Activated CD4-positive, alpha-beta memory T cell treated with anti-CD3 and anti-CD28 coated beads for 36 hours (primary cell): ENCODE measurements at regions of chr3 and their contacts with region 1.

Region 1: GRCh38 chr3:49454458-49454857 is 15.6 kb upstream of the DAG1 start:
- DNase-seq: no peak
- H3K4me3 Mint-ChIP-seq: no peak overlapping the region
- H3K27ac Mint-ChIP-seq: no peak overlapping the region
- H3K4me1 Mint-ChIP-seq: no peaks in the 10 kb centered on the region
- H3K27me3 Mint-ChIP-seq: no peaks in the 10 kb centered on the region

Region 2: GRCh38 chr3:49171119-49171774 is 283.2 kb before region 1 on chr3 and contains the start of gene KLHDC8B:
- CTCF ChIA-PET with region 1: interaction called, 21 read pairs
- POLR2A ChIA-PET with region 1: no interaction called
- intact Hi-C with region 1: loop called (anchors 1 kb)
- DNase-seq: peak; percentile 88
- H3K4me3 Mint-ChIP-seq: peak within 1 kb of the TSS; percentile 82
- H3K27ac Mint-ChIP-seq: no peak within 1 kb of the TSS
- H3K4me1 Mint-ChIP-seq: peaks cover 13% of the 10 kb centered on the region
- H3K27me3 Mint-ChIP-seq: no peaks in the 10 kb centered on the region
- total RNA-seq, gene KLHDC8B: 1.8 to 2.9 TPM

Region 3: GRCh38 chr3:49295489-49296058 is 158.9 kb before region 1 on chr3:
- CTCF ChIA-PET with region 1: interaction called, 12 read pairs
- POLR2A ChIA-PET with region 1: no interaction called
- intact Hi-C with region 1: loop called (anchors 1 kb)
- DNase-seq: peak; percentile 28
- H3K4me3 Mint-ChIP-seq: no peak overlapping the region
- H3K27ac Mint-ChIP-seq: no peak overlapping the region
- H3K4me1 Mint-ChIP-seq: no peaks in the 10 kb centered on the region
- H3K27me3 Mint-ChIP-seq: no peaks in the 10 kb centered on the region

Region 4: GRCh38 chr3:49333916-49334633 is 120.4 kb before region 1 on chr3:
- CTCF ChIA-PET with region 1: interaction called, 49 read pairs
- POLR2A ChIA-PET with region 1: interaction called, 6 read pairs
- intact Hi-C with region 1: no loop called
- DNase-seq: no peak
- H3K4me3 Mint-ChIP-seq: no peak overlapping the region
- H3K27ac Mint-ChIP-seq: peak overlapping the region; percentile 79
- H3K4me1 Mint-ChIP-seq: peaks cover 26% of the 10 kb centered on the region
- H3K27me3 Mint-ChIP-seq: no peaks in the 10 kb centered on the region

Region 5: DNA sequence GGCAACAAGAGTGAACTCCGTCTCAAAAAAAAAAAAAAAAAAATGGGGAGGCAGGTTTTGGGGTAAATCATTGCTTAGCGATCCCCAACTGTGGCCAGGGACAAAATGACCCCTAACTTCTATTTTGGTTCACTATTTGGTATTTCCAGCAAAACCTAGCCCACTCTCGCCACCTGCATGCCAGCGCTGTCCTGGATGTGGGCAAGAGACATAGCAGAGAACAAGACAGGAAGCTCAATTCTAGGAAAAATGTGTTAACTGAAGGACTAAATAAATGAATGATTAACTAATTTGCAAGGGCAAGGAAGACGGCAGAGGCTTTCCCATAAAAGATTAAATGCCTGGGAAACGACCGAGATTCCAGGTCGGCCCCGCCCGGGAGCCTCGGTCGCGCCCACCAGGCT is 25.8 kb before region 1 on chr3:
- CTCF ChIA-PET with region 1: interaction called, 8 read pairs
- POLR2A ChIA-PET with region 1: no interaction called
- intact Hi-C with region 1: loop called (anchors 2 kb)
- DNase-seq: no peak
- H3K4me3 Mint-ChIP-seq: peak overlapping the region; percentile 77
- H3K27ac Mint-ChIP-seq: peak overlapping the region; percentile 73
- H3K4me1 Mint-ChIP-seq: peaks cover 14% of the 10 kb centered on the region
- H3K27me3 Mint-ChIP-seq: no peaks in the 10 kb centered on the region

Region 6: DNA sequence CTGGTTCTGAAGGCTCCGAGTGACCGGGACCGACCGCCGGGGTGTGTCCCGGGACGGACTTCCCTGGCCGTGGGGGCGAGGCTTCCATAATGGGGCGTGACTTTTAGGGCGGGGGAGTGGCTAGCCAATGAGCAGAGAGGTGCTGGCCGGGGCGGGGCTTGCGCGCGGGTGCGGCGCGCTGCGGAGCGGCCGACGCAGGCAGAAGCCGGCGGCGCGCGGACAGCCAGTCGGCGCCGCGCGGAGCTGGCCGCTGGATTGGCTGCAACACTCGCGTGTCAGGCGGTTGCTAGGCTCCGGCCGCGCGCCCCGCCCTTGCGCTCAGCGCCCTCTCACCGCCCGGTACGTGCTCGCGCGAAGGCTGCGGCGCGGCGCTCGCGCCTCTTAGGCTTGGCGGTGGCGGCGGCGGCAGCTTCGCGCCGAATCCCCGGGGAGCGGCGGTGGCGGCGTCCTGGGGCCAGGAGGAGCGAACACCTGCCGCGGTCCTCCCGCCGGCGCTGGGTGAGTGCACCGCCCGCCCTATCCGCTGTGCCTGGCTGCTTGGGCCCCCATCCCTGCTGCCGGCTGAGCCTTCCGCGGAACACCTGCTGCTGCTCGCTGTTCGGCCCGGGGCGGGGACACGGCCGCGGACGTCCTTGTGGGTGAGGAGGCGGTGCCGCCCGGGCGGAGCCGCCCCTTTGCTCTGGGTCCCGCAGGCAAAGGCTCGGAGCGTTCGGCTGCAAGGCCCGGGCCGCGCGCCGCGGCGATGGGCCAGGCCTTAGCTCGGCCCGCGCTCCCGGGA is 15.7 kb after region 1 on chr3 and contains the start of gene DAG1:
- CTCF ChIA-PET with region 1: interaction called, 15 read pairs
- POLR2A ChIA-PET with region 1: interaction called, 6 read pairs
- intact Hi-C with region 1: no loop called
- DNase-seq: peak; percentile 97
- H3K4me3 Mint-ChIP-seq: peak within 1 kb of the TSS; percentile 91
- H3K27ac Mint-ChIP-seq: peak within 1 kb of the TSS; percentile 87
- H3K4me1 Mint-ChIP-seq: peaks cover 21% of the 10 kb centered on the region
- H3K27me3 Mint-ChIP-seq: no peaks in the 10 kb centered on the region
- total RNA-seq, gene DAG1: 9.4 to 9.6 TPM